Right cardiac atrium (tissue), 5 donors: ENCODE measurements at regions of chr22 and their contacts with region 1.

Region 1: DNA sequence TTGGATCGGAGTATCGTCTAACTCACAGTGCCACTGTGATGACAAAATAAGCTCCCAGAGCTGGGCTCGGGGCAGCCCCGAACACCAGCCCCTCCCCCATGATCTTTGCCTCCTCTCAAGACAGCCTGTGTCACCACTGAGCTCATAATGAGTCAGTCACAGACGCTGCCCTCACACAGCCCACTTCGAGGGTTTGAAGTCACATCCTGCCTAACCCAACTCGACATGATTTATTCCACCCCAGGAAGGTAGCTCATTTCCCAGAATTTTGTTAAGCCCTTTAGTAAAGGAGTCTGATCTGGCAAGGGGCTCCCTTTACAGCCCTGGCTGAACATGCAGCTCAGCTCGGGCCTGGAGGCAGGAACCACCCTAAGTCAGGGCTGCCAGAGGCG is 22.8 kb downstream of the MYH9 start:
- DNase-seq: peak; percentile 66 to 81 (median 71)
- ATAC-seq: peak; percentile 42 to 87
- H3K4me3 ChIP-seq: no peak overlapping the region
- H3K27ac ChIP-seq: peak overlapping the region; percentile 16
- H3K4me1 ChIP-seq: peaks cover 70% of the 10 kb centered on the region
- H3K27me3 ChIP-seq: no peaks in the 10 kb centered on the region

Region 2: DNA sequence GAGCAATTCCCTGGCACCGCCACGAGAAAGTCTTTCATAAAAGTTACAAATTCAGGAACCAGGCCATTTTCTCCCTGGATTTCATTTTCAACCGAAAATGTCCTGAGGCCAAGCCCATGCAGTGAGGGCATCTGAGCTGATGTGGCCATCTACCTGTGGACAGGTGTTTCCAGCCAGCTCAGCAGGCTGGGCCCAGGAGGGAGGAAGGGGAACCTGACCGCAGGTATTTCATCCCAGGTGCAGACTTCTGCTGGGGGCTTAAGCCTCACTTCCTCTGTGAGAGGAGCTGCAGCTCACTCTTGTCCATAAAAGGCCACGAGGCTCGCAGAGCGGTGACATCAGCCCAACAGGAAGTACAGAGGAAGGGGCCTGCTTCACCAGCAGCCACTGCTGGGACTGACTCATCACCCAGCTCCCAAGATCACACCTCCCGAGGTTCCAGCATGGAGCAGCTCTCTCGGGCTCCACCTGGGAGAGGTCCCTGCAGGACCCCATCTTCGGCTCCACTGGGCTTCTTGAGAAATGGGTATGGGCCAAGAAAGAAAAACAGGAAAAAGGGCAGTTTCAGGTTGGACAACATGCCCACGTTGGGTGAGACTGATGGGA is 33.6 kb before region 1 on chr22:
- intact Hi-C with region 1: loop called in 2 of 4 experiments (anchors 5 kb)
- DNase-seq: peak; percentile 88 to 91 (median 89)
- ATAC-seq: peak; percentile 50 to 76
- H3K4me3 ChIP-seq: no peak overlapping the region
- H3K27ac ChIP-seq: peak overlapping the region; percentile 99
- H3K4me1 ChIP-seq: peaks cover 77% of the 10 kb centered on the region
- H3K27me3 ChIP-seq: no peaks in the 10 kb centered on the region

Region 3: GRCh38 chr22:36481393-36482168 is 116.6 kb after region 1 on chr22 and contains the start of gene TXN2:
- intact Hi-C with region 1: no loop called
- DNase-seq: peak; percentile 98 to 99 (median 99)
- ATAC-seq: peak; percentile 95 to 97
- H3K4me3 ChIP-seq: peak within 1 kb of the TSS; percentile 50
- H3K27ac ChIP-seq: peak within 1 kb of the TSS; percentile 95
- H3K4me1 ChIP-seq: peaks cover 2% of the 10 kb centered on the region
- H3K27me3 ChIP-seq: no peaks in the 10 kb centered on the region
- total RNA-seq, gene TXN2: 95.4 to 114 (median 105) TPM

Region 4: DNA sequence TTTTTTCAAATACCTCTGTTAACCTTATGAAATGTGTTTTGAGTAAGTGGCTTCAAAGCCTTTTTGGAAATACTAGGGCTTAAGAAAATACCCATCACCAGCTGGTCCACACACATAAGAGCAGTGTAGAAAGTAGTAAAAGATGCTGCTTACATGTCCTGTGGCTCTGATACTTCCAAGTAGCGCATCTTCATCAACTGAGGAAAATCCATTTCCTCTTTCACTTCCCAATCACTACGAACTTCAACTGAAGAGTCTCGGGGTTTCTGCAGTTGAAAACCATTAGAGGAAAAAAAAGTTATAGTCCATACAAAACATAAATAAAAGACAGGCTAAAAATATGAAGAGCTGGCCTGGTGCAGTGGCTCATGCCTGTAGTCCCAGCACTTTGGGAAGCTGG is 155.4 kb after region 1 on chr22:
- intact Hi-C with region 1: no loop called
- DNase-seq: no peak
- ATAC-seq: no peak
- H3K4me3 ChIP-seq: no peak overlapping the region
- H3K27ac ChIP-seq: no peak overlapping the region
- H3K4me1 ChIP-seq: no peaks in the 10 kb centered on the region
- H3K27me3 ChIP-seq: no peaks in the 10 kb centered on the region